ENCODE measurements at regions of chr12 and their contacts with region 1.

Region 1: GRCh38 chr12:117836999-117837736 is 131.6 kb downstream of the KSR2 start:
- ATAC-seq: peak; percentile 72 to 90 (median 78)
- H3K4me3 ChIP-seq: no peak overlapping the region
- H3K27ac ChIP-seq: no peak overlapping the region
- H3K4me1 ChIP-seq: no peaks in the 10 kb centered on the region

Region 2: DNA sequence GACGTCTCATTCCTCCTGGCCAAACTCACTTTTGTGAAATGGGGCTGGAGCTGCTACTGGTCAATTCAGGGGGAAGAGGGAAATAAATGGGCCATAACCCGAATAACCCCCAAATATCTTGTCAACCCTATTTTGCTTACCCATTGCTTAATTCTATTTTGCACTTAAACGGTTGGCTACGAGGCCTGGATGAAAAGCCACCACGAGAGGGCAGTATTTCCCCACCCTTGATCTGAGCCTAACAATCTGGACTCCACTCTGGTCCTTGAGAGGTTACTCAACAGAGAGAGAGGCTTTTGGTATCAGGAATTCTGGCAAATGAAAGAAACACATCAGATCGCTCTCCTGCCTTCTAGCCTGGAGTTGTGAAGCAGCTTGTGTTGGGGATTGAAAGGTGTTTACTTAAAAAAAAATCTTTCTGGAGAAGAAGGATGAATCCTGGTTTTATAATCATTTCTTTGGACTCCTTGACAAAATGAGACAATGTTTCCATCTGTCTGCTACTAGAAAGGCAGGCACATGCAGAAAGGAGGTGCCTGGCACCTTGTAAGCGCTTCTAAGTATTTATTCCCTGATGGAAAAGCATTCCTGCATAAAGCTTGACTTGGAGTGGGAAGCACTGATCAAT is 624.5 kb before region 1 on chr12:
- in situ Hi-C with region 1: loop called in 4 of 9 experiments (anchors 25 kb)
- ATAC-seq: peak; percentile 76 to 93 (median 88)
- H3K4me3 ChIP-seq: no peak overlapping the region
- H3K27ac ChIP-seq: no peak overlapping the region
- H3K4me1 ChIP-seq: no peaks in the 10 kb centered on the region

Region 3: DNA sequence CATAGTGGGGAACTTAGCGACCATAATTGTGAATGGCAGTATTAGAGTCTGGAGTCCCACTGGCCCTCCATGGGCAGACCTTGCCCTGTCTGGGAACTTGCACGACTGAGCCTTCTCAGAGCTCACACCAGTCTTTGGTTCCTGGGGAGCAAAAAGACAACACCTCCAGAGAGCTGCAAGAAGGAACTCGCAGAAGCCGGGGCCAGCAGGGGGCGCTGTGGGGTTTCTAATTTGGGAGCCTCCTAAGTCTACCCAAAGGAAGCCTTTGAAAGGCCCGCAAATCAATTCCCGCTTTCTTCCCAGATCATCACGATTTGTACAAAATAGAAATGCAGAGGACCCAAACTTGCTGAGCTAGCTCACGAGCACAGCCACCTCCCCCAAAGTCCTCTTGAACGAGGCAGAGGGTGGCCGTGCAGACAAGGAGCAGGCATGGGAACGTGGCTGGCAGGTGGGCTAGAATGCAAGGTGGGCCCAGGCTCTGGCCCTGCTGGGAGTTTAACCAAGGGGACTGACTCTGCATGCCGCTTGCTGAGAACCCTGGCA is 600.6 kb before region 1 on chr12:
- in situ Hi-C with region 1: loop called in 2 of 9 experiments (anchors 25 kb)
- ATAC-seq: peak; percentile 43 to 87 (median 68)
- H3K4me3 ChIP-seq: no peak overlapping the region
- H3K27ac ChIP-seq: no peak overlapping the region
- H3K4me1 ChIP-seq: no peaks in the 10 kb centered on the region

Region 4: DNA sequence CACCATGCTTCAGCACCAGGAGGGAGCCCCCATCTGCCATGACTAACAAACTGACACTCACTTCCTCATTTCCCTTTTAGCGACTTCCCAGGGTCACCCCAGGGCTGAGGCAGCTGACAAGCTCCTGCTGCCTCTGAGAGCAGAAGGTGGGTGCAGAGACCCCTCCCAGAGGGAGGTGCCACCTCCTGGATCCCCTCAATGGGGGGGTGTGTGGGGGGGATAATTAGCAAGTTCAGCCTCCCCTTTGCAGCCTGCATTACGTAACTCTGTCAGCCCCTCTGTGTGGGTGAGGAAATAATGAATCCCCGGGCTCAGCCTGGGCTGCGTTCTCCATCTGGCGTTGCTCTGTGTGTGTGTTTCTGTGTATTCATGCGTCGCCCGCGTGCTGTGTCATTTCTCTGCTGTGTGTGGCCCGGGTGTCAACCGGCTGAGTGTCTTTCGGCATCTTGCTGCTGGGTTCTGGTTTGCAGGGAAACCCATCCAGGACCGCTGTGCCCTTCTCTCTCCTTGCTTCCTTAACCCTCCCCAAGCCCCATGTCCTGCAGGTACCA is 503.8 kb before region 1 on chr12:
- in situ Hi-C with region 1: loop called in 1 of 9 experiments (anchors 25 kb)
- ATAC-seq: peak in 5 of 8 experiments; percentile 96
- H3K4me3 ChIP-seq: no peak overlapping the region
- H3K27ac ChIP-seq: peak overlapping the region; percentile 44 to 61
- H3K4me1 ChIP-seq: peaks cover 10 to 12% of the 10 kb centered on the region in 2 donors

Region 5: DNA sequence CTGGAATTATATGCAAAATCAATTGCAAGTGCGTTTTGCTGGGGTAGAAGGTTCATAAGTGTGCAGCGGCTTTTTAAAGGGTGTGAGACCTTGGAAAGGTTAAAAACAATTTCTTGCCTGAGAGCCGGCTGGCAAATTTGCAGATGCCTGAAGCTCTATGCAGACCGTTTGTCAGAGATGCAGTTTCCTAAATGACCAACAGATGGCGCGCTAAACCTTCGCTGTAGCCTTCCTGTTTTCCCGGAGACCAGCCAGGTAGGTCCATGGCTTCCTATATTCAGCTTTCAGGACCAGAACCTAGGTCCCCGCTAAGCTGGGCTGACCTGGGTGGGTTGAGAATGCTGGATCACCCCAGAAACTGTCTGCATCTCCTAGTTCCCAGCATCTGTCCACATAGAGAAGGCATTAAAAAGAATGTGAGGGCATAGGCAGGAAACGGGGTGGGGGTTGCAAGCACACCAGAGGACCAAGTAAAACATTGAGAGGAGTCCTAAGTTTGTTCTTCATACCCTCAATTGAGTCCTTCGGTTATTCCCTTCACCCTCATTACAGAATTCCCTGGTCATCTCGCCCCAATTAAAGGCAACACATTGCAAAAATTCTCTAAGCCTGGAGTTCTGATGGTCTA is 470.0 kb before region 1 on chr12:
- in situ Hi-C with region 1: loop called in 6 of 9 experiments (anchors 10 to 25 kb)
- ATAC-seq: peak; percentile 60 to 84 (median 73)
- H3K4me3 ChIP-seq: no peak overlapping the region
- H3K27ac ChIP-seq: no peak overlapping the region
- H3K4me1 ChIP-seq: no peaks in the 10 kb centered on the region

Region 6: DNA sequence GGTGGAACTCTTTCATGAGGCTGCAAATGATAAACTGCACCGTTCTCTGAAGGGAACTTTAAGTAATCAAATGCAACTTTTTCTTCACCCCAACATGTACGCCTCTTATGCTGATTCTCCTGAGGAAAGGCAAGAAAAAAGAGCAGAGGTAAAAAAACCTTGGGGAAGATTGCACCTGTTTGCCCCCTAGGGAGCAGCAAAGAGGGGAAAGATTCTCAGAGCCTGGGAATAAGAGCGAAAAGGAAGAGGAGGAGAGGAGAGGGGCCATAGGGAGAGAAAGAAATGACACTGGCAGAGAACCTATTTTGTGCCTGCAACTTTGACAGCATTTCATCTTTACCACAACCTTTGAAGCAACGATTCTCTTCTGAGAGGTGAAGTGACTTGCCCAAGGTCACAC is 123.0 kb before region 1 on chr12:
- in situ Hi-C with region 1: no loop called
- ATAC-seq: no peak
- H3K4me3 ChIP-seq: no peak overlapping the region
- H3K27ac ChIP-seq: no peak overlapping the region
- H3K4me1 ChIP-seq: no peaks in the 10 kb centered on the region